SK-N-SH (cell line): ENCODE measurements at regions of chr1 and their contacts with region 1.

Region 1: DNA sequence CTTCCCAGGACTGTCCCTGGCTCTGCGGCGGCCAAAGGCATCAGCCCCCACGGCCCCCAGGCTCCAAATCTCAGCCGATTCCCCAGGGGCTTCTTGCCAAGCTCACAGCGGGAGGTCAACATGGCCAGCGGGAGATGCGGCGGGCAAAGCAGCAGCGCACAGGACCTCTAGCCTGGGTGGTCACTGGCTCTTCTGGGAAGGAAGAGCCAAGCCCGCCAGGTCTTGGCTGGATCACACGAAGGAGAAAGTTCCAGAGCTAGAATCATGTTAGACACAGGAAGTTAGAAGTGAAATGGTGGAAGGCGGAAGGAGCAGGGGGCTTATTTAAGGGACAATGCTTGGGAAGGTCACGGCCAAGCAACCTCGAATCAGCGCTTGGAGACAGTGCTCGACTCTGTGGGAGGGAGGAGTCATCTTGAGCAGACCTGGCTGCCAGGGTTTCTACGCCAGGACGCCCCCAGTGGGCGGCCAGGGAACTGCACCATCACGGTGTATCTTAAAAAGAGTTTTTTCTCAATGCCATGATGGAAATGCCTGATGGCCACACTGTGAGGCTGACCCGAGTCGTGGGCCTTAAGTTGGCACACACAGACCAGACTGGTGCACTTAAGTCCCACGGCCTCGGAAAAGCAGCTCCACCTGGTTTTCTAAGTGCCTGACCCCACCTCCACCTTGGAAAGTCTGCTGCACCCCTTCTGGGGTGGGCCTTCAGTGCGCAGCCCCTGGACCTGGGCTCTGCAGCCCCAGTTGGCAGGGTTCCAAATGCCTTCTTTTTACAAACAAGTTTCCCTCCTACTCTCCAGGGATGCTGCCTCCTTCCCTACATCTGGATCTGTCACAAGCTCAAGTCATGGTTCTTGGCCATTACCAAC is 29.3 kb downstream of the SLC66A1 start:
- DNase-seq: peak; percentile 89
- H3K4me3 ChIP-seq: no peak overlapping the region; a peak in 1 of 4 replicates
- H3K27ac ChIP-seq: peak overlapping the region in 1 of 2 experiments; percentile 85; a peak in 2 of 4 replicates
- H3K4me1 ChIP-seq: peaks cover 0 to 70% of the 10 kb centered on the region in 2 experiments; a peak in 2 of 4 replicates
- H3K27me3 ChIP-seq: no peaks in the 10 kb centered on the region
- CTCF ChIP-seq: peak; percentile 87
- EP300 ChIP-seq: no peak
- RAD21 ChIP-seq: peak; percentile 57

Region 2: DNA sequence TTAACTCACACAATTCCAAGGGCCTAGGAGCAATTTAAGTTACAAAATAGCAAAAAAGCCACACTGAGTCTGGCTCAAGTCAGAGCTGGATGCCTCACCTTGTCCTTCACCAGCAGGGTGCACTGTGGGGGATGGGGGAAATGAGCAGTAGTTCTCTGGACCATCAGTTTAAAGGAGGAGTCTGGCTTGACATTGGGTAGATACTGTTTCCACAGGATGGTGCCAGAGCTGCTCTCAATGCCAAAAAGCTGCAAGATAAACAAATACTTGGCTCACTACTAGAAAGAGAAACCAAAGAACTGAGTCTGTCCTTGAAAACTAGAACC is 108.9 kb before region 1 on chr1:
- CTCF ChIA-PET with region 1: no interaction called
- POLR2A ChIA-PET with region 1: no interaction called
- DNase-seq: no peak
- H3K4me3 ChIP-seq: no peak overlapping the region
- H3K27ac ChIP-seq: no peak overlapping the region
- H3K4me1 ChIP-seq: no peaks in the 10 kb centered on the region
- H3K27me3 ChIP-seq: no peaks in the 10 kb centered on the region
- CTCF ChIP-seq: peak; percentile 14
- EP300 ChIP-seq: no peak
- RAD21 ChIP-seq: no peak

Region 3: DNA sequence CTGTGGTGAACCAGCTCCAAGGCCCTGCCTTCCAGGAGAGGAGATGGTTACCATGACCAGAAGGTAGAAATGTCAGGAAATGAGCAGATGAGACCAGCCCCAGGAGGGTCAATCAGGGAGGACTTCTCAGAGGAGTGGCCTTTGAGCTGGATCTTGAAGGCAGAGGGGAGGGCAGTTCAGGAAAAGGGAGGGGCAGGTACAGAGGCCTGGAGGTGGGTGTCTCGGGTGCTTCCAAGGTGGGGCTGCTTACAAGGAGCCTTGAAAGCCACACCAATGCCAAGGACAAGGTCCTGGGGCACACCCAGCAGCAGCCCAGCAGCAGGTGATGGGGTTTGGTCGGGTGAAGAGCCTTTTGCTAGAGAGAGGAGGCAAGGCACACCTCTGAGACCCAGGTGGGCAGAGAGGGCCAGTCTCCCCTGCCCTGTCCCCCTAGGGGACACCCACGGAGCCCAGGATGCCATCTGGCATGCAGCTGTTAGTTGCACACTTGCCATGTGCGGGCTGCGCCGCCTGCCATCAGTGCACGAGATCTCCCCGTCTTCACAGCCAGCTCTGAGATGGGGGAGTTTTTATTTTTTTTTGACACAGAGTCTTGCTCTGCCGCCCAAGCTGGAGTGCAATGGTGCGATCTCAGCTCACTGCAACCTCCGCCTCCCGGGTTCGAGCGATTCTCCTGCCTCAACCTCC is 10.8 kb before region 1 on chr1:
- CTCF ChIA-PET with region 1: interaction called, 13 read pairs
- POLR2A ChIA-PET with region 1: no interaction called
- DNase-seq: peak; percentile 76
- H3K4me3 ChIP-seq: no peak overlapping the region
- H3K27ac ChIP-seq: no peak overlapping the region
- H3K4me1 ChIP-seq: peaks cover 0 to 4% of the 10 kb centered on the region in 2 experiments; a peak in 1 of 4 replicates
- H3K27me3 ChIP-seq: no peaks in the 10 kb centered on the region
- CTCF ChIP-seq: no peak
- EP300 ChIP-seq: no peak
- RAD21 ChIP-seq: no peak

Region 4: DNA sequence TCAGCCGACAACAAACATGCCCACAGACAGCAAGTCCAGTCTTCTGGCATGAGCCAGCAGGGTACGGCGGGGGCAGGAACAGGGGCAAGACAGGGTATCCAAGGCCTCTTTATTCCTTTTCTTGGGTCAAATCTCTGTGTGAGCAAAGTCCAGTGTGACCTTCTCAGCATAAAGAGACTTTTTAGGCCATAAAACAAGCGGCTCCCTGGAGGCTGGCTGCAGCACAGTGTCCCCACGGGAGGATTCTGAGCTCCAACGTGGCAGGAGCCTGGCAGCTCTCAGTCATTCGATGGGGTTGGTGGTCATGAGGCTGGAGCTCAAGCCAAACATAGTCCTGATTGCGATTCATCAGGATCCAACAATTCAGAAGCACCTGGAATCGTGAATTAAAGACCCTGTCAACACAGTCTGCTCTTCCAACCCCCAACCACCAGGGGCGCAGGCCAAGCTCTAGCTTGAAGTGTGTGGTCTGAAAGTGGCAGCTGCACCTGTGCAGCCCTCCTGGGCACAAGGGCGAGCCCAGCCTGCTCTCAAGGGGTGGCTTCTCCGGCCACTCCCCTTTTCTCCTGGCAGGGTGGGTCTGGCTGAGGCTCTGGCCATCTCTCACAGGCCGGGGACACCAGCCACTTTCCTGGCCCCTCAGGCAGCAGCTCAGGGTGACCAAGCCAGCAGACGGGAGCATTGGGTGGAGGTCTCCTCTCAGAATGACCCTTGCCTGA is 32.8 kb after region 1 on chr1:
- CTCF ChIA-PET with region 1: interaction called, 93 read pairs
- POLR2A ChIA-PET with region 1: no interaction called
- DNase-seq: no peak
- H3K4me3 ChIP-seq: no peak overlapping the region
- H3K27ac ChIP-seq: peak overlapping the region in 1 of 2 experiments; percentile 98; a peak in 2 of 4 replicates
- H3K4me1 ChIP-seq: peaks cover 0 to 62% of the 10 kb centered on the region in 2 experiments; a peak in 2 of 4 replicates
- H3K27me3 ChIP-seq: no peaks in the 10 kb centered on the region
- CTCF ChIP-seq: peak; percentile 28; the same call in 1 of the 2 replicates
- EP300 ChIP-seq: no peak
- RAD21 ChIP-seq: no peak

Region 5: DNA sequence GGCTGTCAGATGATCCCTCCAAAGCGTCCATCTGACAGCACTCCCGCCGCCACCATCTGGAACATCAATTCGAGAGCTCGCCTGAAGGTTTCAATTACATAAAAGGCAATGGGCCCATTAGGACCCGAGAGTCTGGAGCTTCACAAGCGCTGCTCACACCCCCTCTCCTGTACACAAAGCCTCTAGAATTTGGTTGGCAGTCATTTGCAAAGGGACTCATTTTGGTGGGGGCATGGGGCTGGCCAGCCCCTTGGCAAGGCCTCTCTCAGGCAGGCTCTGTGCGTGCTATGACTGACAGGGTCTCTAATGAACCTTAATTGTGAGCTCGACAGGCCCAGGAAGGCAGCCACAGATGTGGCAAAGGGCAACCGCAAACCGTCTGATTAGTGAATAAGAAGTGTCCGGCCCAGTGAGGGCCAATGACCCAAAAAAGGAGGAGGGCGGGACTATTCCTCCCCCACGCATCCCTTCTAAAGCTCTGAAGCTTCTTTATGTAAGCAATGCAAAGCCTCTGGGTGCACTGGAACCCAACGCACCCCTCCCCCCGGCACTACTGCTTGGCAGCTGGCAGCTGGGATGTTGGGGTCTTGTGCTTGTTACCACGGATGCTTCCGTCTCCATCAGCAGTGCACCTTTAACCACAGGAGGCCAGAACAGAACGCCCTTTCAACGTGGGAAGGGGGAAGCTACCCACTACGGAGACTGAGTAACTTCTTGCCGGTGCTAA is 64.5 kb after region 1 on chr1:
- CTCF ChIA-PET with region 1: interaction called, 17 read pairs
- POLR2A ChIA-PET with region 1: no interaction called
- DNase-seq: peak; percentile 72
- H3K4me3 ChIP-seq: no peak overlapping the region
- H3K27ac ChIP-seq: peak overlapping the region in 1 of 2 experiments; percentile 95; a peak in 2 of 4 replicates
- H3K4me1 ChIP-seq: peaks cover 6 to 64% of the 10 kb centered on the region in 2 experiments; a peak in 3 of 4 replicates
- H3K27me3 ChIP-seq: no peaks in the 10 kb centered on the region
- CTCF ChIP-seq: no peak
- EP300 ChIP-seq: peak in 1 of 2 experiments; percentile 44; a peak in 1 of 4 replicates
- RAD21 ChIP-seq: no peak

Region 6: DNA sequence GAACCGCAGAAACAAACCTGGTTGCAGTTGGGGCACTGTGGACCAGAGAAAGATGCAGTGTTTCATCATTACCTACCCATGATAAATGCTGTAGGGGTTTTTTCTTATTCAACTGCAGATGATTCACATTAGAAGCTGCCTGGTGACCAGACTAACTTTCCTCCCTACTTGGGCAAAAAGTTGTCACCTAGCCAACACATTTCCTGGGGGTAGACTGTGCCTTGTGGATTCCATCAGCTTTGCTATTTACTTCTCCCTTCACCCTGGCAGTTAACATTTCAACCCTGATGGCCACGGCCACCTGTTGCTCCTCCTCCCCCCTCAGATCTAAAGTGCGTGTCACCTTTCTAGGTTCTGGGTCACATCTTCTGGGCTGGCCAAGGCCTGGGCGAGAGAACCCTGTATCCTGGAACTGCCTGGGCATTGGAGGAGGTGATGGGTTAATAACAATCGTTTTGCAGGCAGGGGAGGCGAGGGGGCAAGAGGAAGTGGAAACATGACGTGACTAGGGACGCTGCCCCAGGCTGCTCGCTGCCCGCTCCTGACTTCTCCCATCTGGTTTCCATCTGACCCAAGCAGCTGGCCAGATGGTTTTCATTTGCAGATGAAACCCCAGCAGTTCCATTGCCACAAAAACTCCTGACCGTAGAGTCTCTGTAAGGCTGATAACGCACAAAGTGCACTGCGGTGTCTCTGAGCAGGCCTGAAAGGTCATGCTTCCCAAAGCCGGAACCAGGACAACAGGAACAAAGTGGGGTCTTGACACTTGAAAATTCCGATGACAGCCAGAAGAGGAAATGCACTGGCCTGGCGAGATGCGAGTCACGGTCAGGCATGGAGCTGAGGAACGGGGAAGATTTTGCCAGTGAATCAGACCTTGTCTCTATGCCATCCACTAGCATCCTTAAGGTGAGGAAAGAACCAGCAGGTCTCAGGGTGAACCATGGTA is 107.3 kb after region 1 on chr1:
- CTCF ChIA-PET with region 1: interaction called, 11 read pairs
- POLR2A ChIA-PET with region 1: no interaction called
- DNase-seq: peak; percentile 89
- H3K4me3 ChIP-seq: peak overlapping the region; percentile 22 to 48
- H3K27ac ChIP-seq: peak overlapping the region; percentile 96 to 99
- H3K4me1 ChIP-seq: peaks cover 55 to 82% of the 10 kb centered on the region in 2 experiments
- H3K27me3 ChIP-seq: no peaks in the 10 kb centered on the region
- CTCF ChIP-seq: no peak
- EP300 ChIP-seq: peak; percentile 74 to 92; a peak in 3 of 4 replicates
- RAD21 ChIP-seq: no peak

Region 7: GRCh38 chr1:19661721-19662228 is 320.3 kb after region 1 on chr1:
- CTCF ChIA-PET with region 1: interaction called, 23 read pairs
- POLR2A ChIA-PET with region 1: no interaction called
- DNase-seq: no peak
- H3K4me3 ChIP-seq: no peak overlapping the region
- H3K27ac ChIP-seq: no peak overlapping the region
- H3K4me1 ChIP-seq: peaks cover 0 to 6% of the 10 kb centered on the region in 2 experiments; a peak in 1 of 4 replicates
- H3K27me3 ChIP-seq: no peaks in the 10 kb centered on the region; the same call in 1 of the 2 replicates
- CTCF ChIP-seq: peak; percentile 83
- EP300 ChIP-seq: no peak
- RAD21 ChIP-seq: peak; percentile 75